OCI-LY7 (cell line): ENCODE measurements at regions of chr22 and their contacts with region 1.

Region 1: GRCh38 chr22:22060200-22061084 is 77.9 kb upstream of the TOP3B start:
- DNase-seq: peak; percentile 84
- H3K4me3 ChIP-seq: no peak overlapping the region
- H3K27ac ChIP-seq: peak overlapping the region; percentile 50
- H3K4me1 ChIP-seq: peaks cover 60% of the 10 kb centered on the region
- CTCF ChIP-seq: peak; percentile 99

Region 2: DNA sequence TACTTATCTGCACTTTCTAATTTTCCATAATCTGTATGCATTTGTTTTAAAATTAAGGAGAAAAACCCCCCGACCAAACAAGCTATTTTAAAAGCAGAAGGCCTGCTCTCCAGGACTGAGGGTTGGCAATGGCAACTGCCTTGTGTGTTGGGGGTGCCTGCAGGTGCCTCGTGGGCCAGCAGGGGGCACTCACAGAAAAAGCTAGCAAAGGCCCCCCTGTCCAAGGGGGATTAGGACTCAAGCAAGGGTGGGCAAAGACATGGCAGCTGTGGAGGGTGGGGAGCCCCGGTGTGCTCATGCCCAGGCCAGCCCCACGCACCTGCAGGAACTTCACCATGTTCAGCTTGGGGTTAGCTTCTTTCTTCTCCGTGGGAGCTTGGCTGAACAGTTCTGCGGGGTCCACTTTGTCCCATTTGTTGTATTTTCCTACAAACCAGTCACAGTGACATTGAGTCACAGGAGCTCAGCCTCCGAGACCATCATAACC is 88.1 kb before region 1 on chr22:
- CTCF ChIA-PET with region 1: no interaction called
- POLR2A ChIA-PET with region 1: no interaction called
- intact Hi-C with region 1: loop called (anchors 1 kb)
- DNase-seq: peak; percentile 66
- H3K4me3 ChIP-seq: no peak overlapping the region
- H3K27ac ChIP-seq: no peak overlapping the region
- H3K4me1 ChIP-seq: no peaks in the 10 kb centered on the region
- CTCF ChIP-seq: peak; percentile 97

Region 3: DNA sequence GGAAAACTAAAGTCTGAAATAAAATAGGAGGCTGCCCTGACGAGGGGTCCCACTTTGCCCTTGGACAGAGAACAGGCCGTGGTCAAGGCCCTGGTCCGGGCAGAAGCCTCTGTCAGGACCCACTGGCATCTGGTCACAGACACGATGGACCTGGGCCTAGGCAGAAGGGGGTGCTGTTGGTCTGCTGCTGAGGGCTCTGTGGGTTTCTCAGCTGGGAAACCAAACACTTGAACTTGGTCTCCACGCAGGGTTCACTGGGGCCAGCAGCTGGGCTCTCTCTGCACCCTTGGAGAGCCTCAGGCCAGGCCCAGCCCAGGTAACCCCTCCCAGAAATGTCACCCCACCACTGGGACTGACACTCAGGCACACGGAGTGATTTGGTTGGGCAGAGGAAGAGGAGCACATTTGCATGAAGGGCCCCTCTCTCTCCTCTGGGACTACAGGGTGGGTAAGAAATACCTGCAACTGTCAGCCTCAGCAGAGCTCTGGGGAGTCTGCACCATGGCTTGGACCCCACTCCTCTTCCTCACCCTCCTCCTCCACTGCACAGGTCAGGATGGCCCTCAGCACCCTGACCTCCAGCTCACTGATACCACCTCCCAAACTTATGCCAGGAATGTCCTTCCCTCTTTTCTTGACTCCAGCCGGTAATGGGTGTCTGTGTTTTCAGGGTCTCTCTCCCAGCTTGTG is 29.8 kb before region 1 on chr22:
- CTCF ChIA-PET with region 1: interaction called, 6 read pairs
- POLR2A ChIA-PET with region 1: interaction called, 27 read pairs
- intact Hi-C with region 1: loop called (anchors 1 kb)
- DNase-seq: peak; percentile 96
- H3K4me3 ChIP-seq: peak overlapping the region; percentile 68
- H3K27ac ChIP-seq: peak overlapping the region; percentile 94
- H3K4me1 ChIP-seq: peaks cover 99% of the 10 kb centered on the region
- CTCF ChIP-seq: peak; percentile 82

Region 4: DNA sequence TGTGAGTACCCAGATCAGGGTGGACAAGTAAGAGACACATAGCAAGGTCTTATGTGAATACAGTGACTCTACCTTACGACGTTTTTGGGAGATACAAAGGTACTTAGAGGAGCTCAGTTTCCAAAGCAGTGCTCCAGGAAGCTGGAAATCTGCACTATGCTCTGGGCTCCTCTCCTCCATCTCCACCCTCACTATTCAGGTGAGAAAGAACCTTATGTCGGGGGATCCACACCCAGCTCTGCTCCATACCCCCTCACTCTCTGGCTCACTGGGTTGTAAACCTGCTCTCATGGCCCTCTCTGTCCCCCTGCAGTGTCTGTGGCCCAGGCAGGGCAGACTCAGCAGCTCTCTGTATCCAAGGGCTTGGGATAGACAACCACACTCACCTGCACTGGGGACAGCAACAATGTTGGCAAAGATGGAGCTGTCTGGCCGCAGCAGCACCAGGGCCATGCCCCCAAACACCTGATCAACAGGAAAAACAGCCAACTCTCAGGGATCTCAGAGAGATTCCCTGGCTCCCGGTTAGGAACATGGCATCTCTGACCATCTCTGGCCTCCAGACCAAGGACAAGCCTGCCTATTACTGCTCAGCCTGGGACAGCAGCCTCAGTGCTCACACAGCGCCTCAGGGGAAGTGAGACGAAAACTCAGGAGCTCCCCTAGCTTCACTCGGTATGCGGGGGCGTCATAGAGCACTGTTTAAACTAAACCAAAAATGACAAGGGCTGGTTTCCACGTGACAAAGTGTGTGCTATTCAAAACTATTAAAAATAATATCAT is 17.0 kb before region 1 on chr22:
- CTCF ChIA-PET with region 1: interaction called, 10 read pairs
- POLR2A ChIA-PET with region 1: interaction called, 22 read pairs
- intact Hi-C with region 1: no loop called
- DNase-seq: peak; percentile 81
- H3K4me3 ChIP-seq: peak overlapping the region; percentile 70
- H3K27ac ChIP-seq: peak overlapping the region; percentile 84
- H3K4me1 ChIP-seq: peaks cover 96% of the 10 kb centered on the region
- CTCF ChIP-seq: peak; percentile 70

Region 5: GRCh38 chr22:22099833-22100812 is 39.7 kb after region 1 on chr22:
- CTCF ChIA-PET with region 1: interaction called, 3 read pairs
- POLR2A ChIA-PET with region 1: interaction called, 7 read pairs
- intact Hi-C with region 1: loop called (anchors 2 kb)
- DNase-seq: peak; percentile 71
- H3K4me3 ChIP-seq: peak overlapping the region; percentile 55
- H3K27ac ChIP-seq: peak overlapping the region; percentile 84
- H3K4me1 ChIP-seq: peaks cover 40% of the 10 kb centered on the region
- CTCF ChIP-seq: peak; percentile 86

Region 6: DNA sequence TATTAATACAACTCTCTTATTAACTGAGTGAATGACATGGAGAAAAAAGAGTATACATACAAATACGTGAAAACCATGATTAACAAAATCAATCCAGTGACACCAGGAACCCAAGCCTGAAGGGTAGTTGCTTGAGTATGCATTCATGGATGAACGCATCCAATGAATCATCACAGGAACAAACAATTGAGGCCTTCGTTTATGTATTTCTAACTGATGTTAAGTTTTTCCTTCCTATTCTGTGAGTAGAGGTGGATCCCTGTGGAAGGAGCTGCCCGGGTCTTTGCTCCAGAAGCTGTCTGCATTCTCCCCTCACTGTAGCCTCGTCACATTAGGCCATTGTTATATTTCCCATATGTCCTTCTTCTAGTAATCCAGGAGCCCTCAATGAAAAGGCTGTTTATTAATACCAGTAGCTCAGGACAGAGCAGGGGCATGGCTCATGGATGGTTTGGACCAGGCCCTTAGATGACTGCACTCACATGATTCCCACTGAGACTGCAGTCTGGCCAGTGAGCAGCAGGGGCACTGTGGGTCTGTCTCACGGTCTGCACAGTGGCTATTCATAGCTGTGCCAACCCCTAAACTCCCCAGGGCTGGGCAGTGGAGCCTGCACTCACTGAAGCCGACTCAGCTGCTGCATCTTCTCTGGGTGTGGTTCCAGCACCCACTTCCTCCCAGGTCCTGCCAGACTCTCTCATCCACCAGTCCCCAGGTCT is 50.3 kb after region 1 on chr22:
- CTCF ChIA-PET with region 1: interaction called, 13 read pairs
- POLR2A ChIA-PET with region 1: interaction called, 8 read pairs
- intact Hi-C with region 1: loop called (anchors 2 kb)
- DNase-seq: peak; percentile 95
- H3K4me3 ChIP-seq: peak overlapping the region; percentile 38
- H3K27ac ChIP-seq: peak overlapping the region; percentile 64
- H3K4me1 ChIP-seq: peaks cover 34% of the 10 kb centered on the region
- CTCF ChIP-seq: peak; percentile 89

Region 7: GRCh38 chr22:22156716-22157347 is 96.4 kb after region 1 on chr22:
- CTCF ChIA-PET with region 1: no interaction called
- POLR2A ChIA-PET with region 1: interaction called, 7 read pairs
- intact Hi-C with region 1: loop called (anchors 1 kb)
- DNase-seq: peak; percentile 94
- H3K4me3 ChIP-seq: peak overlapping the region; percentile 46
- H3K27ac ChIP-seq: peak overlapping the region; percentile 84
- H3K4me1 ChIP-seq: peaks cover 55% of the 10 kb centered on the region
- CTCF ChIP-seq: peak; percentile 96